Lower lobe of right lung (tissue), 2 donors: ENCODE measurements at regions of chr12 and their contacts with region 1.

Region 1: GRCh38 chr12:117025481-117026151 is 73.6 kb downstream of the TESC start:
- DNase-seq: peak; percentile 72
- ATAC-seq: peak; percentile 82 to 84
- H3K4me3 ChIP-seq: no peak overlapping the region
- H3K27ac ChIP-seq: no peak overlapping the region
- H3K4me1 ChIP-seq: peaks cover 9% of the 10 kb centered on the region
- H3K27me3 ChIP-seq: no peaks in the 10 kb centered on the region
- CTCF ChIP-seq: peak; percentile 93

Region 2: GRCh38 chr12:116703214-116703795 is 322.3 kb before region 1 on chr12:
- intact Hi-C with region 1: no loop called
- DNase-seq: peak; percentile 73
- ATAC-seq: peak; percentile 82 to 90
- H3K4me3 ChIP-seq: no peak overlapping the region
- H3K27ac ChIP-seq: no peak overlapping the region
- H3K4me1 ChIP-seq: peaks cover 4% of the 10 kb centered on the region
- H3K27me3 ChIP-seq: no peaks in the 10 kb centered on the region
- CTCF ChIP-seq: peak; percentile 95

Region 3: GRCh38 chr12:117119592-117120198 is 94.1 kb after region 1 on chr12:
- intact Hi-C with region 1: loop called (anchors 10 kb)
- DNase-seq: no peak
- ATAC-seq: peak; percentile 65 to 75
- H3K4me3 ChIP-seq: no peak overlapping the region
- H3K27ac ChIP-seq: no peak overlapping the region
- H3K4me1 ChIP-seq: peaks cover 18% of the 10 kb centered on the region
- H3K27me3 ChIP-seq: no peaks in the 10 kb centered on the region
- CTCF ChIP-seq: peak; percentile 65